ENCODE measurements at regions of chr12 and their contacts with region 1.

Region 1: GRCh38 chr12:54958048-54958658 is 26.4 kb downstream of the TESPA1 start:
- DNase-seq: peak; percentile 54
- ATAC-seq: no peak
- H3K4me3 Mint-ChIP-seq: no peak overlapping the region
- H3K27ac Mint-ChIP-seq: peak overlapping the region; percentile 95
- H3K4me1 Mint-ChIP-seq: peaks cover 90% of the 10 kb centered on the region
- H3K27me3 Mint-ChIP-seq: no peaks in the 10 kb centered on the region
- CTCF ChIP-seq: peak; percentile 91

Region 2: GRCh38 chr12:54759751-54760150 is 198.4 kb before region 1 on chr12:
- CTCF ChIA-PET with region 1: interaction called, 12 read pairs
- POLR2A ChIA-PET with region 1: no interaction called
- intact Hi-C with region 1: no loop called
- DNase-seq: peak; percentile 28
- ATAC-seq: no peak
- H3K4me3 Mint-ChIP-seq: no peak overlapping the region
- H3K27ac Mint-ChIP-seq: no peak overlapping the region
- H3K4me1 Mint-ChIP-seq: peaks cover 15% of the 10 kb centered on the region
- H3K27me3 Mint-ChIP-seq: no peaks in the 10 kb centered on the region
- CTCF ChIP-seq: peak; percentile 47

Region 3: GRCh38 chr12:54853995-54854566 is 104.1 kb before region 1 on chr12 and contains the start of gene MUCL1:
- CTCF ChIA-PET with region 1: interaction called, 89 read pairs
- POLR2A ChIA-PET with region 1: interaction called, 5 read pairs
- intact Hi-C with region 1: loop called (anchors 2 kb)
- DNase-seq: peak; percentile 87
- ATAC-seq: peak; percentile 100
- H3K4me3 Mint-ChIP-seq: no peak within 1 kb of the TSS
- H3K27ac Mint-ChIP-seq: no peak within 1 kb of the TSS
- H3K4me1 Mint-ChIP-seq: peaks cover 22% of the 10 kb centered on the region
- H3K27me3 Mint-ChIP-seq: no peaks in the 10 kb centered on the region
- CTCF ChIP-seq: peak; percentile 94
- total RNA-seq, gene MUCL1: not detected

Region 4: DNA sequence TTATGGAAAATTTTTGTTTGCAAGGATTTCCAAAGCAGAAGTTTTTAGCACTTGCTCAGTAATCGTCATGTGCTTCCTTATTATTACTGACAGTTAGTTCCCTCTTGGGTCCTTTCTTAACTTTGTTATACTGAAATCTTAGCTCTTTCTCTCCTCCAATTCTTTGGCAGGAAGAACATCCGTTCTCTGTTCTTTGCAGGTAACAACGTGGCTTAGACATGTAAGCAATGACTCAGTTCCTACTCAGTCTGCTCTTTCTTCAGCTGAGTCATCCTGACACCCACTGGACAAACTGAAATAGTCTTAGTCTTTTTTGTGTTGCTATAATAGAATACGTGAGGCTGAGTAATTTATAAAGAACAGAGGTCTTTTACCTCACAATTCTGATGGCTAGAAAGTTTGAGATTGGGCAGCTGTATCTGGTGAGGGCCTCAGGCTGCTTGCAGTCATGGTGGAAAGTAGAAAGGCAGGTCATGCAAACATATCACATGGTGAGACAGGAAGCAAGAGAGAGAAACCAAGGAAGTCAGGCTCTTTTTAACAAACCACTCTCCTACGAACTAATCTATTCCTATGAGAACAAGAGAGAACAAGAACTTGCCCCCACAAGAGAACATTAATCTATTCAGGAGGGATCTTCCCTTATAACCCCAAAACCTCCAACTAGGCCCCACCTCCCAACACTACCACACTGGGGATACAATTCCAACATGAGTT is 22.8 kb before region 1 on chr12:
- CTCF ChIA-PET with region 1: interaction called, 15 read pairs
- POLR2A ChIA-PET with region 1: interaction called, 4 read pairs
- intact Hi-C with region 1: loop called (anchors 1 kb)
- DNase-seq: peak; percentile 71
- ATAC-seq: peak; percentile 85
- H3K4me3 Mint-ChIP-seq: peak overlapping the region; percentile 26
- H3K27ac Mint-ChIP-seq: peak overlapping the region; percentile 99
- H3K4me1 Mint-ChIP-seq: peaks cover 61% of the 10 kb centered on the region
- H3K27me3 Mint-ChIP-seq: no peaks in the 10 kb centered on the region
- CTCF ChIP-seq: no peak

Region 5: GRCh38 chr12:54984658-54985376 is 26.7 kb after region 1 on chr12 and contains the start of gene TESPA1:
- CTCF ChIA-PET with region 1: interaction called, 141 read pairs
- POLR2A ChIA-PET with region 1: interaction called, 6 read pairs
- intact Hi-C with region 1: loop called (anchors 2 kb)
- DNase-seq: peak; percentile 94
- ATAC-seq: peak; percentile 88
- H3K4me3 Mint-ChIP-seq: peak within 1 kb of the TSS; percentile 85
- H3K27ac Mint-ChIP-seq: peak within 1 kb of the TSS; percentile 94
- H3K4me1 Mint-ChIP-seq: peaks cover 53% of the 10 kb centered on the region
- H3K27me3 Mint-ChIP-seq: no peaks in the 10 kb centered on the region
- CTCF ChIP-seq: no peak
- total RNA-seq, gene TESPA1: 107 to 112 TPM

Region 6: GRCh38 chr12:55392032-55392795 is 434.1 kb after region 1 on chr12:
- CTCF ChIA-PET with region 1: no interaction called
- POLR2A ChIA-PET with region 1: no interaction called
- intact Hi-C with region 1: no loop called
- DNase-seq: no peak
- ATAC-seq: no peak
- H3K4me3 Mint-ChIP-seq: no peak overlapping the region
- H3K27ac Mint-ChIP-seq: no peak overlapping the region
- H3K4me1 Mint-ChIP-seq: no peaks in the 10 kb centered on the region
- H3K27me3 Mint-ChIP-seq: peaks cover 6% of the 10 kb centered on the region
- CTCF ChIP-seq: no peak

Region 7: GRCh38 chr12:55629058-55629841 is 671.1 kb after region 1 on chr12:
- CTCF ChIA-PET with region 1: no interaction called
- POLR2A ChIA-PET with region 1: no interaction called
- intact Hi-C with region 1: no loop called
- DNase-seq: peak; percentile 48
- ATAC-seq: peak; percentile 78
- H3K4me3 Mint-ChIP-seq: no peak overlapping the region
- H3K27ac Mint-ChIP-seq: peak overlapping the region; percentile 36
- H3K4me1 Mint-ChIP-seq: peaks cover 24% of the 10 kb centered on the region
- H3K27me3 Mint-ChIP-seq: peaks cover 24% of the 10 kb centered on the region
- CTCF ChIP-seq: no peak